ENCODE measurements at regions of chr11 and their contacts with region 1.

Region 1: GRCh38 chr11:63916837-63917691 is at the start of gene RCOR2:
- DNase-seq: peak; percentile 81
- ATAC-seq: no peak
- H3K4me3 Mint-ChIP-seq: peak within 1 kb of the TSS; percentile 90
- H3K27ac Mint-ChIP-seq: peak within 1 kb of the TSS; percentile 92
- H3K4me1 Mint-ChIP-seq: peaks cover 31% of the 10 kb centered on the region
- H3K27me3 Mint-ChIP-seq: no peaks in the 10 kb centered on the region; the same call in 1 of the 2 replicates
- CTCF ChIP-seq: no peak
- total RNA-seq, gene RCOR2: 77.4 to 98.3 TPM (median 92.0 TPM) in 3 replicates

Region 2: DNA sequence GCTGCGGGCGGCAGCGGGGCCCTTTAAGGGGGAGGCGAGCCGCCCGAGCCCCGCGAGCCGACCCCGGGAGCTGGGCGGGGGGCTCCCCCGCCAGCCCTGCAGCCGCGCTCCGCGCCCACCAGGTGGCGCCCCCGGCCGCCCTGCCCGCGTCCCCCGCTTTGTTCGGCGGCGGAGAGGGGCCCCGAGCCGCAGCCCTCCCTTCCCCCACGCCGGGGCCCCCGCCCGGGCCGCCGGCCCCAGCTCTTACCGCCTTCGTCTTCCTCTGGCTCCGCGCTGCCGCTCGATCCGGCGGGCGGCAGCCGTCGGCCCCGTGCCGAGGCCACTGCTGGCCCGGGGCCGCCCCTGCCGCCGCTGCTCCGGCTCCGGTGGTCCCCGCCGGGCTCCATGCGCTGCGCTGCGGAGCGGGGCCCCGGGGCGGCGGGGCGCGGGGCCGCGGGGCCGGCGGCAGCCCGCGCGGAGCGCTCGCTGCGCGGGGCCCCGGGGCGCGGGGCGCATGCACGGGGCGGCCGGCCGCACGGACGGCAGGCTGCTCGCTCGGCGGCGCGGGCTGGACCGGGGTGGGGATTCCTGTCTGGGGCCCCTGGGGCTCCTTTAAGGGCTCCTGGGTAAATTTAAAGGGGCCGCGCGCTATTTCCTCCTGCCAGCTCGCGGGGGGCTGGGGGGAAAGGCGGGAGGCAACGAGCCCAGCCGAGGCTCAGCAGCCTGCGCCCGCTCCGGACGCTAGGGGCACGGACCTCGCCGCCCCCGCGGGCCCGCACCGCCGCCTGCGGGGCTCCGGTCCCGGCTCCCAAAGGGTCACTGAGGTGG is 148.6 kb before region 1 on chr11 and contains the start of gene ZFTA:
- CTCF ChIA-PET with region 1: interaction called, 11 read pairs
- POLR2A ChIA-PET with region 1: interaction called, 3 read pairs
- DNase-seq: peak; percentile 75
- ATAC-seq: peak; percentile 6
- H3K4me3 Mint-ChIP-seq: peak within 1 kb of the TSS; percentile 98
- H3K27ac Mint-ChIP-seq: peak within 1 kb of the TSS; percentile 98
- H3K4me1 Mint-ChIP-seq: peaks cover 37% of the 10 kb centered on the region
- H3K27me3 Mint-ChIP-seq: peaks cover 32% of the 10 kb centered on the region
- CTCF ChIP-seq: peak; percentile 78
- total RNA-seq, gene ZFTA: 44.7 to 47.2 TPM (median 45.6 TPM) in 3 replicates

Region 3: DNA sequence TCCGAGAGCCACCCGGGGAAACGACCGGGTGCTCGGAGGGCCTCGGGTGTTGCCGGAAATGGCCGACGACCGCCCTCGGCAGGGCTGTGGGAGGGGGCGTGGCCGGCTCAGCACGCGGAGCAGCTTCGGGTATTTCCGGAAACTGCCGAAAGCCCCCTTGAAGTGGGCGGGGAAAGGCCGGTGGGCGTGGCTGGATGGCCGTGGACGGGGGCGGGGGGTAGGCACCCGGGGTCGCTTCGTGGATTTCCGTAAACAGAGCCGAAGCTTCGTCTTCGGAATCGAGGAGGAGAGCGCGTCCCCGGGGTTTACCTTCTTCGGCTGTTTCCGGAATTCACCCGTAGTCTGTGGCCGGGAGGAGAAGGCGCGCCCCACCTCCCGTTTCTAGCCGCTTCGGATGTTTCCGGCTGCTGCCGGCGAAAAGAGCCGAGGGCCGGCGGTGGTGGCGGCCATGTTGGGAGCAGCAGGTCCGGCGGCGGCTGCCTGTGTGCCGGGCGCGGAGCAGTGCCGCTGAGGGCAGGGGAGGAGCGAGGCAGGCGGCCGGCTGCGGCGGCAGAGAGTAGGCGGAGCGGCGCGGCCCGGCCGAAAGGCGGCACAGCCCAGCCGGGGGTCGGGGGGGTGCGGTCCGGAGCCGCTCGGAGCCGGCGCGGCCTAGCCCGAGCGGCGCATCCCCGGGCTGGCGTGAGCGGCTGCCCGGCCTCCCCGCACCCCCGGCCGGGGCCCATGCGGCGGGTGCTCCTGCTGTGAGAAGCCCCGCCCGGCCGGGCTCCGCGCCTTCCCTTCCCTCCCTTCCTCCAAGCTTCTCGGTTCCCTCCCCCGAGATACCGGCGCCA is 78.2 kb before region 1 on chr11 and contains the start of gene MARK2:
- CTCF ChIA-PET with region 1: interaction called, 94 read pairs
- POLR2A ChIA-PET with region 1: interaction called, 14 read pairs
- DNase-seq: peak; percentile 99
- ATAC-seq: peak; percentile 88
- H3K4me3 Mint-ChIP-seq: peak within 1 kb of the TSS; percentile 90
- H3K27ac Mint-ChIP-seq: peak within 1 kb of the TSS; percentile 93
- H3K4me1 Mint-ChIP-seq: peaks cover 58% of the 10 kb centered on the region
- H3K27me3 Mint-ChIP-seq: no peaks in the 10 kb centered on the region
- CTCF ChIP-seq: no peak
- total RNA-seq, gene MARK2: 50.8 to 57.4 TPM (median 51.4 TPM) in 3 replicates

Region 4: GRCh38 chr11:63933459-63933858 is 16.4 kb after region 1 on chr11:
- CTCF ChIA-PET with region 1: interaction called, 103 read pairs
- POLR2A ChIA-PET with region 1: interaction called, 16 read pairs
- DNase-seq: no peak
- ATAC-seq: no peak
- H3K4me3 Mint-ChIP-seq: no peak overlapping the region
- H3K27ac Mint-ChIP-seq: no peak overlapping the region
- H3K4me1 Mint-ChIP-seq: peaks cover 12% of the 10 kb centered on the region
- H3K27me3 Mint-ChIP-seq: peaks cover 32% of the 10 kb centered on the region
- CTCF ChIP-seq: no peak

Region 5: DNA sequence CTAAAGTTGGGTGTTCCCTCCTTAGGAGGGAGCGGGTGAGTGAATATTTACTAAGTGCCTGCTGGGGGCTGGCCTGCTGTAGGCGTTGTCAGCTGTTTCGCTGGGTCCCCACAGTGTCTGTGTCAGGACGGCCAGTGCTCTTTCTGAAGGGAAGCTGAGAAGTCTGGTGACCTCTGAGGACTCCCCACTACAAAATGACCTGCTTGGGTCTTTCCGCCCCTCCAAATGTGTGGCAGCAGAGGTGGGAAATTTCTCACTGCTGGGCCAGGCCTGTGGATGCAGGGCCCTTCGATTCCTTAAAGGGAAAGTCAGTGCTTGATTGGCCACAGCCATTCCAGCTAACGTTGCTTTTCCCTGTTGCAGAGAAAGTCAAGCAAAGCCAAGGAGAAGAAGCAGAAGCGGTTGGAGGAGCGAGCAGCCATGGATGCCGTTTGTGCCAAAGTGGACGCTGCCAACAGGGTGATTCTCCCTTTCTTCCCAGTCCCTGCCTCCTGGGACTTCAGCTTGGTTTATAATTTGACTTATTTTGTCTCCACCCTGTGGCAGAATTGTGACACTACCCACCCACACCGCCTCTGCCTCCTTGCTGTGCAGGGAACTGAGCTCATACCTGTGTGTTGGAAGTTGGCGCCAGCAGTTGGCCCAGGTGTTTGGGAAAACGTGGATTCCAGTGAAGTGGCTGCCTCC is 28.6 kb after region 1 on chr11:
- CTCF ChIA-PET with region 1: interaction called, 56 read pairs
- POLR2A ChIA-PET with region 1: interaction called, 24 read pairs
- DNase-seq: peak; percentile 68
- ATAC-seq: peak; percentile 95
- H3K4me3 Mint-ChIP-seq: no peak overlapping the region
- H3K27ac Mint-ChIP-seq: peak overlapping the region; percentile 80
- H3K4me1 Mint-ChIP-seq: peaks cover 4% of the 10 kb centered on the region; the same call in 1 of the 2 replicates
- H3K27me3 Mint-ChIP-seq: no peaks in the 10 kb centered on the region
- CTCF ChIP-seq: peak; percentile 41